OCI-LY7 (cell line): ENCODE measurements at regions of chr6 and their contacts with region 1.

Region 1: GRCh38 chr6:166106076-166106686 is 61.5 kb downstream of the TBXT start:
- DNase-seq: peak; percentile 76
- H3K4me3 ChIP-seq: no peak overlapping the region
- H3K27ac ChIP-seq: no peak overlapping the region
- H3K4me1 ChIP-seq: peaks cover 4% of the 10 kb centered on the region
- CTCF ChIP-seq: peak; percentile 98

Region 2: GRCh38 chr6:165729307-165729936 is 376.8 kb before region 1 on chr6:
- CTCF ChIA-PET with region 1: no interaction called
- POLR2A ChIA-PET with region 1: no interaction called
- intact Hi-C with region 1: loop called (anchors 1 kb)
- DNase-seq: peak; percentile 34
- H3K4me3 ChIP-seq: no peak overlapping the region
- H3K27ac ChIP-seq: no peak overlapping the region
- H3K4me1 ChIP-seq: no peaks in the 10 kb centered on the region
- CTCF ChIP-seq: peak; percentile 92

Region 3: GRCh38 chr6:165884813-165885765 is 221.1 kb before region 1 on chr6:
- CTCF ChIA-PET with region 1: no interaction called
- POLR2A ChIA-PET with region 1: no interaction called
- intact Hi-C with region 1: loop called (anchors 1 kb)
- DNase-seq: peak; percentile 72
- H3K4me3 ChIP-seq: no peak overlapping the region
- H3K27ac ChIP-seq: no peak overlapping the region
- H3K4me1 ChIP-seq: no peaks in the 10 kb centered on the region
- CTCF ChIP-seq: peak; percentile 93